ENCODE measurements at regions of chr19 and their contacts with region 1.

Region 1: GRCh38 chr19:42219812-42220750 is at the start of gene ZNF526:
- DNase-seq: peak; percentile 98
- H3K4me3 Mint-ChIP-seq: peak within 1 kb of the TSS; percentile 91
- H3K27ac Mint-ChIP-seq: peak within 1 kb of the TSS; percentile 86
- H3K4me1 Mint-ChIP-seq: peaks cover 24% of the 10 kb centered on the region
- H3K27me3 Mint-ChIP-seq: no peaks in the 10 kb centered on the region
- CTCF ChIP-seq: no peak
- total RNA-seq, gene ZNF526: 11.5 and 12.3 TPM in 2 replicates

Region 2: DNA sequence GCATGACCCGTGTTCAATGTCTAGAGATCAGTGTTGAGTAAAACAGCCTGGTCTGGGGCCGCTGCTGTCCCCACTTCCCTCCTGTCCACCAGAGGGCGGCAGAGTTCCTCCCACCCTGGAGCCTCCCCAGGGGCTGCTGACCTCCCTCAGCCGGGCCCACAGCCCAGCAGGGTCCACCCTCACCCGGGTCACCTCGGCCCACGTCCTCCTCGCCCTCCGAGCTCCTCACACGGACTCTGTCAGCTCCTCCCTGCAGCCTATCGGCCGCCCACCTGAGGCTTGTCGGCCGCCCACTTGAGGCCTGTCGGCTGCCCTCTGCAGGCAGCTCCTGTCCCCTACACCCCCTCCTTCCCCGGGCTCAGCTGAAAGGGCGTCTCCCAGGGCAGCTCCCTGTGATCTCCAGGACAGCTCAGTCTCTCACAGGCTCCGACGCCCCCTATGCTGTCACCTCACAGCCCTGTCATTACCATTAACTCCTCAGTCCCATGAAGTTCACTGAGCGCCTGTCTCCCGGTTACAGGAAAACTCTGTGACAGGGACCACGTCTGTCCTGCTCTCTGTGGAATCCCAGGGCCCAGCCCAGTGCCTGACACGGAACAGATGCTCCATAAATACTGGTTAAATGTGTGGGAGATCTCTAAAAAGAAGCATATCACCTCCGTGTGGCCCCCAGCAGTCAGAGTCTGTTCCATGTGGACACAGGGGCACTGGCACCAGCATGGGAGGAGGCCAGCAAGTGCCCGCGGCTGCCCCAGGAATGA is 513.2 kb before region 1 on chr19:
- CTCF ChIA-PET with region 1: no interaction called
- POLR2A ChIA-PET with region 1: no interaction called
- intact Hi-C with region 1: no loop called
- DNase-seq: peak; percentile 62
- H3K4me3 Mint-ChIP-seq: peak overlapping the region; percentile 63
- H3K27ac Mint-ChIP-seq: no peak overlapping the region
- H3K4me1 Mint-ChIP-seq: no peaks in the 10 kb centered on the region
- H3K27me3 Mint-ChIP-seq: peaks cover 93% of the 10 kb centered on the region
- CTCF ChIP-seq: peak; percentile 71

Region 3: DNA sequence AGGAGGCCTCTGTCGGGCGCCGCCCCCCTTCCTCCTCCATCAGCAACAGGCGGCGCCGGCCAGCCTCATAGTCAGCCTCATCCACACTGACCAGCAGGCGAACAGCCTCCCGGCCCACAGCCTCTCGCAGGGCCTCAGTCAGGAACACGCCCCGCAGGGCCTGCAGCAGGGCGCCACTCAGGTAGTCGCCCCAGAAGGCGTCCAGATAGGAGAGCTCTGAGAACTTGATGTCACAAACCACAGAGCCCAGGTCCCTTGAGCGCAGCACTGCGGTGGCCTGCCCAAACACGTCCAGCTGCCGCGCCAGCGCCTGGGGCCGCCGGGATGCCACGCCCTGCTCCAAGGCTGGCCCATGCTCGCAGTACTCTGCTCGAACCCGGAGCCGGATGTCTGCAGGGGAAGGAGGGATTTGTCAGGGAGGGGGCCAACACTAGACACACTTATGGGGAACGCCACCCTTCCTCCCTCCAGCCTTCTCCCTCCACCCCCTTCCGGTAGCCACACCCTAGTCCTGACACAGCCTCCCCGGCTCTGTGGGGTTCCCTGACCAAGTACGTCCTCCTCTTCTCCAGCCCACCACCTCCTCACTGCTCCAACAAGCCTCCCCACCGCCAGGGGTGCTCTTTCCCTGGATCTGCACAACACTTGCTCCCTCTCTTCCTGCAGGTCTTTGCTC is 20.5 kb before region 1 on chr19:
- CTCF ChIA-PET with region 1: no interaction called
- POLR2A ChIA-PET with region 1: interaction called, 30 read pairs
- intact Hi-C with region 1: no loop called
- DNase-seq: peak; percentile 78
- H3K4me3 Mint-ChIP-seq: peak overlapping the region; percentile 10
- H3K27ac Mint-ChIP-seq: peak overlapping the region; percentile 16
- H3K4me1 Mint-ChIP-seq: peaks cover 34% of the 10 kb centered on the region
- H3K27me3 Mint-ChIP-seq: no peaks in the 10 kb centered on the region
- CTCF ChIP-seq: peak; percentile 13

Region 4: GRCh38 chr19:42207767-42208271 is 12.3 kb before region 1 on chr19:
- CTCF ChIA-PET with region 1: interaction called, 4 read pairs
- POLR2A ChIA-PET with region 1: interaction called, 30 read pairs
- intact Hi-C with region 1: no loop called
- DNase-seq: peak; percentile 81
- H3K4me3 Mint-ChIP-seq: peak overlapping the region; percentile 19
- H3K27ac Mint-ChIP-seq: peak overlapping the region; percentile 72
- H3K4me1 Mint-ChIP-seq: peaks cover 50% of the 10 kb centered on the region
- H3K27me3 Mint-ChIP-seq: no peaks in the 10 kb centered on the region
- CTCF ChIP-seq: no peak

Region 5: GRCh38 chr19:42268704-42269477 is 48.8 kb after region 1 on chr19 and contains the start of gene CIC:
- CTCF ChIA-PET with region 1: no interaction called
- POLR2A ChIA-PET with region 1: interaction called, 17 read pairs
- intact Hi-C with region 1: no loop called
- DNase-seq: peak; percentile 100
- H3K4me3 Mint-ChIP-seq: no peak within 1 kb of the TSS
- H3K27ac Mint-ChIP-seq: no peak within 1 kb of the TSS
- H3K4me1 Mint-ChIP-seq: peaks cover 23% of the 10 kb centered on the region
- H3K27me3 Mint-ChIP-seq: no peaks in the 10 kb centered on the region
- CTCF ChIP-seq: no peak
- total RNA-seq, gene CIC: 66.9 and 67.9 TPM in 2 replicates

Measured in MCF 10A (cell line).